Activated CD8-positive, alpha-beta T cell treated with anti-CD3 and anti-CD28 coated beads for 36 hours (primary cell): ENCODE measurements at regions of chr20 and their contacts with region 1.

Region 1: GRCh38 chr20:46013826-46014516 is 5.3 kb downstream of the MMP9 start:
- DNase-seq: peak; percentile 83
- ATAC-seq: peak; percentile 86
- H3K4me3 Mint-ChIP-seq: peak overlapping the region; percentile 44
- H3K27ac Mint-ChIP-seq: no peak overlapping the region
- H3K4me1 Mint-ChIP-seq: peaks cover 42% of the 10 kb centered on the region
- H3K27me3 Mint-ChIP-seq: peaks cover 62% of the 10 kb centered on the region
- CTCF ChIP-seq: peak; percentile 99

Region 2: GRCh38 chr20:45924391-45925261 is 89.3 kb before region 1 on chr20:
- CTCF ChIA-PET with region 1: no interaction called
- POLR2A ChIA-PET with region 1: no interaction called
- intact Hi-C with region 1: no loop called
- DNase-seq: no peak
- ATAC-seq: no peak
- H3K4me3 Mint-ChIP-seq: no peak overlapping the region
- H3K27ac Mint-ChIP-seq: no peak overlapping the region
- H3K4me1 Mint-ChIP-seq: peaks cover 3% of the 10 kb centered on the region
- H3K27me3 Mint-ChIP-seq: peaks cover 2% of the 10 kb centered on the region
- CTCF ChIP-seq: no peak

Region 3: DNA sequence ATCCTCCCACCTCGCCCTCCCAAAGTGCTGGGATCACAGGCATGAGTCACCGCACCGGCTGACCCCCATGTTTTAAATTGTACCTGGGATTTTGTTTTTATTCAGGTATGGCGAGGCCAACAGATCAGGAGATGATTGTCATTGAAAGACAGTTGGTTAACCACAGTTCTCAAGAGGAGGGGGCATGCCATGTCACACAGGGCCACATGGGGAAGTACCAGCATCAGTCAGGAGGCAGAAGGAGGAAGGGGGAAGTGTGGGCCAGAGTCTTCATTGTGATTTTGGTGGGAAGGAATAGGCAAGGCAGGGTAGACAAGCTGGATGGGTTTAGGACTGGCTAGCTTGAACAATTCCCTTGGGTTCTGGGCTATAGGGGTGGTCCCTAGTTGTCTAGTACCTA is 15.2 kb before region 1 on chr20:
- CTCF ChIA-PET with region 1: interaction called, 71 read pairs
- POLR2A ChIA-PET with region 1: interaction called, 3 read pairs
- intact Hi-C with region 1: no loop called
- DNase-seq: peak; percentile 63
- ATAC-seq: peak; percentile 85
- H3K4me3 Mint-ChIP-seq: no peak overlapping the region
- H3K27ac Mint-ChIP-seq: peak overlapping the region; percentile 2
- H3K4me1 Mint-ChIP-seq: peaks cover 52% of the 10 kb centered on the region
- H3K27me3 Mint-ChIP-seq: peaks cover 13% of the 10 kb centered on the region
- CTCF ChIP-seq: no peak

Region 4: GRCh38 chr20:46057856-46058598 is 44.1 kb after region 1 on chr20:
- CTCF ChIA-PET with region 1: interaction called, 11 read pairs
- POLR2A ChIA-PET with region 1: no interaction called
- intact Hi-C with region 1: no loop called
- DNase-seq: peak; percentile 33
- ATAC-seq: no peak
- H3K4me3 Mint-ChIP-seq: no peak overlapping the region
- H3K27ac Mint-ChIP-seq: no peak overlapping the region
- H3K4me1 Mint-ChIP-seq: peaks cover 50% of the 10 kb centered on the region
- H3K27me3 Mint-ChIP-seq: peaks cover 34% of the 10 kb centered on the region
- CTCF ChIP-seq: no peak

Region 5: DNA sequence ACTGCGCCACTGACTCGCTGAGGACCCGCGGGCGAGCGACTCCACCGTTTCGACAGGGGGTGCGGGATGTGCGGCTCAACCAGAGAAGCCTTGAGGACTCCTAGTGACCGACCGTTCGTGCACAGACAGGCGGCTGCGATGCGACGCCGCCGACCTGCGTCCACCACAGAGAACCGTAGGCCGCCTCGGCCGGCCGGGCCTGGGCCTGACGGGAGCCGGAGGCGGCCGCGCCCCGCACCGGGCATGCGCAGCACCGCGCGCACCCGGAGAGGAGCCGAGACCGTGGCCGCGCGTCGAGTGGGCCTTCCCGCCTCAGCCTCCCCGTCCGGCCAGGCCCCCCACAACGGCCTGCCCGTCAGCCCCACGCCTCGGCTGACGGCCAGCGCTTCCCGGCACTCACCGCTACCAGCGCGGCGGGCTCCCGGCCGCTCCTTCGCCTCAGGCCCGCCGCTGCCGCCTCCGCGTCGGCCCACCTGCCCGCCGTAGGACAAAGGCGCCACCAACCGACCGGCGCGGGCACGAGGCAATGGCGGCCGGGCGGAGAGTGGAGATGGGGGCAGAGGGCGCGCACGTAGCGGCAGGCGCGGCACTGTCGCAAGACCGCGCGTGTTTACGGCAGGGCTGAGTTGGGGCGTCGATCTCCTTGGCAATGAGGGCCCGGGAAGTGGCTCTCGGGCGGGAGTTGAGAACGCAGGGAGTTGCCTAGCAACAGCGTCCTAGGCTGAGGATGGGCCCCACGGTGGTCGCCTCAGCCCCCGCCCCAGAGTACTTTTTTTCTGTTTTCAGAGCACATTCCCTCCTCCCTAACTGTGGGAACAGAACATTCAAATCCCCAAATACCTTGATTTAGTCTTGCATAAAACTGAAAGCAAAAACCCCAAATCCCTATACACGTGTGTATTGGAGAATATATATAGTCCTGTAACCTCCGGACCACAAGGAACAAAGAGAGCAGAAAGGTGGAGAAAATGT is 75.7 kb after region 1 on chr20 and contains the start of gene NCOA5:
- CTCF ChIA-PET with region 1: interaction called, 19 read pairs
- POLR2A ChIA-PET with region 1: no interaction called
- intact Hi-C with region 1: no loop called
- DNase-seq: peak; percentile 96
- ATAC-seq: peak; percentile 93
- H3K4me3 Mint-ChIP-seq: peak within 1 kb of the TSS; percentile 79
- H3K27ac Mint-ChIP-seq: peak within 1 kb of the TSS; percentile 88
- H3K4me1 Mint-ChIP-seq: peaks cover 46% of the 10 kb centered on the region
- H3K27me3 Mint-ChIP-seq: no peaks in the 10 kb centered on the region
- CTCF ChIP-seq: peak; percentile 42
- total RNA-seq, gene NCOA5: 13.1 to 16.8 TPM

Region 6: DNA sequence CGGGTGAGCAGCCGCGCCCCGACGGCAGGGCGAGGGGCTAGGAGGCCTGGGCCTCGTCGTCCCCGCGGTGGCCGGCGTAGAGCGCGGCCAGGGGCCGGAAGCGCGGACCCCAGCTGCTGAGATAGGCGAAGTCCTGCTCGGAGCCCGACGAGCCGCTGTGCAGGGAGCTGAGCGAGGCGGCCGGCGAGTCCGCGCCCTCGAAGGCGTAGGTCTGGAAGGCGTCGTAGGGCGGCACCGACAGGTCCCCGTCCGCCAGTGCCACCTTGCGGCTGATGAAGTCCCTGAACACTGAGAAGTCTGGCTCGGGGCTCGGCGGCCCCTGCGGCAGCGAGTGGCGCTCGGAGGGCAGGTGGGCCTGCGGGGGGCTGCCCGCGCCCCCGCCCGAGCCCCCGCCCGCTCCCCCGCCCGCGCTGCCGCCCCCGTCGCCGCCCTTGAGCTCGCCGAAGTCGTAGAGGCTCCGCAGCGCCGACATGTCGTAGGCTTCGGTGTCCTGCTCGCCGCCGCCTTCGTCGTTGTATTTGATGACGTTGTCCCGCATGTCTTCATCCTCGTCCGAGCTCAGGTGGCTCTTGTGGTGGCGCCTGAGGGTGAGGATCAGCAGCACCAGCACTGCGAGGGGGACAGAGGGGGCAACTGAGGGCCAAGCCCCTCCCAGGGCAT is 160.6 kb after region 1 on chr20:
- CTCF ChIA-PET with region 1: interaction called, 32 read pairs
- POLR2A ChIA-PET with region 1: no interaction called
- intact Hi-C with region 1: no loop called
- DNase-seq: peak; percentile 84
- ATAC-seq: peak; percentile 98
- H3K4me3 Mint-ChIP-seq: no peak overlapping the region
- H3K27ac Mint-ChIP-seq: no peak overlapping the region
- H3K4me1 Mint-ChIP-seq: no peaks in the 10 kb centered on the region
- H3K27me3 Mint-ChIP-seq: peaks cover 41% of the 10 kb centered on the region
- CTCF ChIP-seq: peak; percentile 69